CD8-positive, alpha-beta T cell (primary cell): ENCODE measurements at regions of chr7 and their contacts with region 1.

Region 1: GRCh38 chr7:150404805-150405583 is 25.9 kb downstream of the ZNF775 start:
- DNase-seq: peak; percentile 61 to 91 (median 76)
- ATAC-seq: peak; percentile 81
- H3K4me3 ChIP-seq: peak overlapping the region; percentile 86 to 88
- H3K4me3 Mint-ChIP-seq: peak overlapping the region; percentile 94
- H3K27ac ChIP-seq: peak overlapping the region; percentile 80 to 93
- H3K27ac Mint-ChIP-seq: peak overlapping the region; percentile 100
- H3K4me1 ChIP-seq: peaks cover 30% of the 10 kb centered on the region
- H3K4me1 Mint-ChIP-seq: peaks cover 39% of the 10 kb centered on the region
- H3K27me3 ChIP-seq: no peaks in the 10 kb centered on the region
- H3K27me3 Mint-ChIP-seq: no peaks in the 10 kb centered on the region
- CTCF ChIP-seq: no peak

Region 2: GRCh38 chr7:150322833-150323681 is 81.9 kb before region 1 on chr7 and contains the starts of genes ACTR3C and LRRC61:
- CTCF ChIA-PET with region 1: interaction called, 3 read pairs
- POLR2A ChIA-PET with region 1: interaction called, 3 read pairs
- intact Hi-C with region 1: loop called in 1 of 2 experiments (anchors 1 kb)
- DNase-seq: peak in 8 of 9 experiments; percentile 54 to 82 (median 66)
- ATAC-seq: peak; percentile 50
- H3K4me3 ChIP-seq: peak within 1 kb of the TSS; percentile 87 to 93
- H3K4me3 Mint-ChIP-seq: peak within 1 kb of the TSS; percentile 93
- H3K27ac ChIP-seq: peak within 1 kb of the TSS; percentile 74 to 90
- H3K27ac Mint-ChIP-seq: peak within 1 kb of the TSS; percentile 98
- H3K4me1 ChIP-seq: peaks cover 20% of the 10 kb centered on the region
- H3K4me1 Mint-ChIP-seq: peaks cover 41% of the 10 kb centered on the region
- H3K27me3 ChIP-seq: no peaks in the 10 kb centered on the region
- H3K27me3 Mint-ChIP-seq: no peaks in the 10 kb centered on the region
- CTCF ChIP-seq: no peak
- total RNA-seq, gene ACTR3C: 4.0 to 4.5 TPM
- total RNA-seq, gene LRRC61: 8.4 to 10.8 TPM

Region 3: DNA sequence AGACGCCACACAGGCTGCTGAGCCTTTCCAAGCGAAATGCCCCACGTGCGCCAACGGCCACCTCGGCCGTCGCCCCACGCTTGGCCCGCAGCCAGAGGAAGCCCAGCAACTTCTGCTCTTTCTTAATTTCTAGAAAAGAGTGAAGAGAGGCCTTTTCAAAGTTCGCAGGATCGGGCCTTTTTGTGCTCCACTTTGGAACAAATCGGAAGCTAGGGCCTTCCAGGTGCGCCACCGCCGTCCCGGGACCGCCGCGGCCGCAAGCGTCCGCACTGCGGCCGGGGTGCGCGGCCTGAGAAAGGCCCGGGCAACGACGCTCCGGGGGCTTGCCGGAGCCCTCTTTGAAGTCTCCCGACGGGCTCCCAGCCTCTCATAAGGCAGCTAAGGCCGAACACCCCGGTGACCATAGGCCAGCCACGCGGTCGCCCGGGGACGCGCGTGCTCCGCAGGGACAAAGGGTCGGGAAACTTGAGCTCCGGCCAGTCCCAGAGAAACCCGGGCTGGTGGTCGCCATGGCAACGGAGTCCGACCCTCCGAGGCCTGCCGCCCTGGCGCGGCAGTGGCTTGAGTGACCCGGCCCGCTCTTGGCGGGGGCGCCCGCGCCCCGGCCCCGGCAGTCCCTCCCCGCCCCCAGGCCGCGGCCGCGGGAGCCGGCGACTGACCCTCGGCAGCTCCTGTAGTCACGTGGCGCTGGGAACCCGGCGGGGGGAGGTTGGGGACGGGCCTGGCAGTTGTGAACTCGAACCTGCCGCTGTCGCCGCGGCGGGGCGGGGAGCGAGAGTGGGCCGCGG is 36.7 kb before region 1 on chr7 and contains the start of gene REPIN1:
- CTCF ChIA-PET with region 1: interaction called, 28 read pairs
- POLR2A ChIA-PET with region 1: interaction called, 56 read pairs
- intact Hi-C with region 1: loop called in 1 of 2 experiments (anchors 1 kb)
- DNase-seq: peak; percentile 52 to 90 (median 85)
- ATAC-seq: no peak
- H3K4me3 ChIP-seq: peak within 1 kb of the TSS; percentile 78 to 95
- H3K4me3 Mint-ChIP-seq: peak within 1 kb of the TSS; percentile 95
- H3K27ac ChIP-seq: peak within 1 kb of the TSS; percentile 53 to 73
- H3K27ac Mint-ChIP-seq: peak within 1 kb of the TSS; percentile 95
- H3K4me1 ChIP-seq: peaks cover 47% of the 10 kb centered on the region
- H3K4me1 Mint-ChIP-seq: peaks cover 58% of the 10 kb centered on the region
- H3K27me3 ChIP-seq: no peaks in the 10 kb centered on the region
- H3K27me3 Mint-ChIP-seq: no peaks in the 10 kb centered on the region
- CTCF ChIP-seq: no peak
- total RNA-seq, gene REPIN1: 54.0 to 54.1 TPM

Region 4: DNA sequence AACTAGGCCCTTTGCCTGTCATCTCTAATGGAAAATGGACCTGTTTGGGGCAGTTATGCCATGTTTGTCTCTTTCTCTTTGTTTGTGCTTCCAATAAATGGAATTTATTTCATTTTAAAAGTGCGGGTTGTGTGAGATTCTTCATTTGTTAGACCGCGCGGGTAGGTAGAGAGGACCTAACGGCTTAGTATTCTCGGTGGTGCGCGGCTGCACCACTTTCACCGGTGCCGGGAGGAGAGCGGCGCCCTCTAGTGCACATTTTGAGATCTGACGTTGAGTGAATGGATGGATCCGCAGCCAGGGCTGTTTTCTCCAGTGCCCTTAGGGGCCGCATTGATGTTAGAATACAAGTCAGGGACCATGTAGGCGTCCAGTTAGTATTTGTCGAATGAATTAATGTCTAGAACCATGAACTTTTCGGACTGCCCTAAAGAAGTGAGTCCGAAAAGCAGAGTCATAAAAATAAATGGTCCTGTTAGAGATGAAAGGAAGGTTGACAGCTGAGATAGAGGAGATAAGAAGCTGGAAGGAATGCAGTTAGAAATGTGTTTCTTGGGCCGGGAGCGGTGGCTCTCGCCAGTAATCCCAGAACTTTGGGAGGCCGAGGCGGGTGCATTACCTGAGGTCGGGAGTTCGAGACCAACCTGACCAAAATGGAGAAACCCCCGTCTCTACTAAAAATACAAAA is 16.1 kb after region 1 on chr7:
- CTCF ChIA-PET with region 1: interaction called, 12 read pairs
- POLR2A ChIA-PET with region 1: interaction called, 8 read pairs
- intact Hi-C with region 1: loop called in 1 of 2 experiments (anchors 1 kb)
- DNase-seq: peak; percentile 75 to 93 (median 88)
- ATAC-seq: peak; percentile 99
- H3K4me3 ChIP-seq: no peak overlapping the region
- H3K4me3 Mint-ChIP-seq: no peak overlapping the region
- H3K27ac ChIP-seq: no peak overlapping the region
- H3K27ac Mint-ChIP-seq: no peak overlapping the region
- H3K4me1 ChIP-seq: peaks cover 4% of the 10 kb centered on the region
- H3K4me1 Mint-ChIP-seq: peaks cover 5% of the 10 kb centered on the region
- H3K27me3 ChIP-seq: no peaks in the 10 kb centered on the region
- H3K27me3 Mint-ChIP-seq: no peaks in the 10 kb centered on the region
- CTCF ChIP-seq: peak; percentile 91